PC-9 (cell line): ENCODE measurements at regions of chr15 and their contacts with region 1.

Region 1: DNA sequence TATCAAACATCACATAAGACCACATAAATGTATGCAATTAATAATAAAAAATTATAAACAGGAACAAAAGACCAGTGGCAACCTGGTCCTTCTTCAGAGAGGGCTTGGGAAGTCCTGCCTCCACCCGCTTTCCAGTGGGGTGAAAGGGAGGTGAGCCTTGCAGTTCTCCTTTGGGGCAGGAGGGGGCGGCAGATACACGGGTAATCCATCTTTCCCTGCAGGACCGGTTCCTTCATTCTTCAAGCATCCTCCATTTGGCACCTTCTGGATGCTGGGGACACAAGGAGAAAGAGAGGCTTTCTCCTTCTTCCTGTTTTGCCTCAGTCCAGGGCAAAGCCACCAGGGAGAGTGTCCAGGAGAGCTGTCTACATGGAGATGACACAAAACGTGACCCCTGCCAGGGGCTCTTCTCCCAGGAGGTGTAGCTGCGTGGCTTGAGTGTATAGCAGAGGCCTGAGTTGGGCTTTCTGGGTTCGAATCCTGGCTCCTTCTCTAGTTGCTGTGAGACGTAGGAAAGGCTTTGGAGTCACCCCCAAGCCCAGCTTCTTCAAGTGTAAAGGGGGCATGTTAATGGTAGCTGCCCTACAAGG is 23.2 kb downstream of the RPLP1 start:
- DNase-seq: peak; percentile 67 to 82
- H3K4me3 ChIP-seq: no peak overlapping the region
- H3K27ac ChIP-seq: no peak overlapping the region
- H3K4me1 ChIP-seq: peaks cover 4% of the 10 kb centered on the region; the same call in 1 of the 2 replicates
- H3K27me3 ChIP-seq: no peaks in the 10 kb centered on the region
- CTCF ChIP-seq: peak; percentile 87

Region 2: GRCh38 chr15:69225355-69226025 is 250.4 kb before region 1 on chr15:
- CTCF ChIA-PET with region 1: no interaction called
- POLR2A ChIA-PET with region 1: no interaction called
- intact Hi-C with region 1: no loop called
- DNase-seq: peak in 1 of 2 experiments; percentile 35
- H3K4me3 ChIP-seq: no peak overlapping the region
- H3K27ac ChIP-seq: no peak overlapping the region
- H3K4me1 ChIP-seq: peaks cover 16% of the 10 kb centered on the region
- H3K27me3 ChIP-seq: no peaks in the 10 kb centered on the region
- CTCF ChIP-seq: peak; percentile 49; the same call in 1 of the 2 replicates

Region 3: DNA sequence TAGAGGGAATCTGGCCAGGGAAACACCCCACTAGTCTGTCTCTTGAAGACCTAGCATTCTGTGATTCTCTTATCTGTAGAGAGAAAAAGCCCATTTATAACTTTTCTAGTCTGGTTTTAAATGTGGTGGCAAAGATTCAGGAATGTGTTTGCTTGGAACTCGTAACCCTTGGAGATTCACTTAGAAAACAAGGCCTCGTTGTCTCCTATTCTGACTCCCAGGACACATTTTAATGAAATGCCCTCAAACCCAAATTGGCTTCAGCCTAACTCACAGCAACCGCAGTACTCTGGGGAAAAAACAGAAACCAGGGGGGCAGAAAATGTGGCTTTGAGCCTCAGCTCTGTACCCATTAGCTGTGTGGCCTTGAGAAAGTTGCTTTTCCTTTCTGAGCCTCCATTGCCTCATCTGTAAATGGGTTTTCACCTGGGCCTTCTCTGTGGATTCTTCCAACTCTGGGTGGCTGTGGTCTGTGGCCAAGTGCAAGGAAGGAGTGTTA is 13.3 kb after region 1 on chr15:
- CTCF ChIA-PET with region 1: no interaction called
- POLR2A ChIA-PET with region 1: no interaction called
- intact Hi-C with region 1: no loop called
- DNase-seq: no peak
- H3K4me3 ChIP-seq: no peak overlapping the region
- H3K27ac ChIP-seq: no peak overlapping the region
- H3K4me1 ChIP-seq: peaks cover 10% of the 10 kb centered on the region
- H3K27me3 ChIP-seq: no peaks in the 10 kb centered on the region
- CTCF ChIP-seq: no peak

Region 4: DNA sequence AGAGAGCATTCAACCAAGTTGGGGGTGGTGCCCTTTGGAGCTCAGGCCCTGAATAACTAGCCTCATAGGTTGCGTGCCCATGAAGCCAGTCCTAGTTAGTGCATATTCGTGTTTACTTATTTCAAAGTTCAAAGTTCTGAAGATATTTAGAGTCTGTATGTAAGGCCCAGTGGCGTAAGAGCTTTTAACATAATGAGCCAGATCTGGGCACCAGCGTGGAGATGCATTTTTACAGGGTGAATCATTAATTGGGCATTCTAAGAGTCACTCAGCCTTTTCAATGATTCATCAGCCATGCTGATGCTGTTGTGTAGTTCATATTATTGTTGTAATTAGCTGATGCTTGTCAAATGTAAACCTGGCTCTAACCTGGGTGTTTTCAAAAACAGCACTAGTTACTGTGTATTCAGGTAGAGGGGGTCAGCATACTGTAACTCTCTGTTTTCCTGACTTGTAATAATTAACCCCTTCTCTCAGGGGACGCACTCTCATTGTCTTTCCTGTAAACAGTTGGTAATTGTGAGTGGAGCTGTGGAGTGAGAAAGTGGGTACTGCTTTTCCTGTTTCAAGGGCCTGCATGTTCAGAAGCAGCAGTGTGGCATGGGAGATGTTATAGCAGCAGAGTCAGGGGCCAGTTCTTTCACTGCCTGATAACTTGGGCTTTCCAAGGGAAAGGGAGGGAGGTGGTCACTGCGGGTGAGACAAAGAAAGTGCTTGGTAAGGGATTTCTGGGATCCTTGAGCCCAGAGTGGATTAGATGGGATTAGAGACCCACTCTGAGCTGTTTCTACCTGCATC is 81.7 kb after region 1 on chr15:
- CTCF ChIA-PET with region 1: interaction called, 20 read pairs
- POLR2A ChIA-PET with region 1: interaction called, 10 read pairs
- intact Hi-C with region 1: loop called (anchors 5 kb)
- DNase-seq: peak; percentile 67 to 95
- H3K4me3 ChIP-seq: no peak overlapping the region
- H3K27ac ChIP-seq: peak overlapping the region; percentile 63
- H3K4me1 ChIP-seq: peaks cover 54% of the 10 kb centered on the region
- H3K27me3 ChIP-seq: no peaks in the 10 kb centered on the region
- CTCF ChIP-seq: no peak

Region 5: GRCh38 chr15:69593981-69594966 is 118.4 kb after region 1 on chr15:
- CTCF ChIA-PET with region 1: no interaction called
- POLR2A ChIA-PET with region 1: no interaction called
- intact Hi-C with region 1: loop called (anchors 2 kb)
- DNase-seq: peak; percentile 83 to 98
- H3K4me3 ChIP-seq: peak overlapping the region; percentile 5; the same call in 1 of the 2 replicates
- H3K27ac ChIP-seq: peak overlapping the region; percentile 85
- H3K4me1 ChIP-seq: peaks cover 49% of the 10 kb centered on the region
- H3K27me3 ChIP-seq: peaks cover 27% of the 10 kb centered on the region
- CTCF ChIP-seq: no peak

Region 6: DNA sequence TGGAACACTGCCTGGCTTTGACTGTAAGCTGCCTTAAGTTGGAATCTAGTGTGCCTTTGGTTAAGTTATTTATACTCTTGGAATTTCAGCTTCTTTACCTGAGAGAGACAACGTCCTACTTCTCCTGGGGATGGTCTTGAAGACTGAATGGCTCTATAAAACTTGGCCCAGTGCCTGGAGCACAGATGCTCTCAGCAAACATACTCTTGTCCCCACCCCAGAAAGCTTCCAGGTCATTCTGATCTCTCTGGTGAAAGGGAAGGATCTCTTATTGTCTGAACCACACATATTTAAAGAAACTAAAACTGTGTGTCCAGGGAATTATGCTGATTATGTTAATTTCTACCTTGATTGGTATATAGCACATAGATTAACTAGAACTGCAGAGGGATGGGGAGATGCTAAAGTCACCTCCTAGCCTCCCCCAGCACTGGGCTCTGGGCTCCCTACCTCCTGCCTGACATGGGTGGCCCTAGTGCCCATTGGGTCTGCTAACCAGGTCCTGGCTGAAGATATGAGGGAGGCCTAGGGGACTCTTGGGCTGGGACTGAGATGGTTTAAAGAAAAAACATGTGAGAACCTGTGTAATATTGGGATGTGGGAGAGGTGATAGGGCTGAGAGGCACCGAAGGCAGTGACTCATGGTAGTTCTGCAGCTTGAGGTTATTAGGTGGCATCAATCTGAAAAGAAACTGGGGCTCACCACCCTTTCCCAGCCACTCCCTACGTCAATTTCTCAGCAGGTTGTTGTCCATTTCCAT is 147.7 kb after region 1 on chr15:
- CTCF ChIA-PET with region 1: no interaction called
- POLR2A ChIA-PET with region 1: no interaction called
- intact Hi-C with region 1: no loop called
- DNase-seq: no peak
- H3K4me3 ChIP-seq: no peak overlapping the region
- H3K27ac ChIP-seq: peak overlapping the region; percentile 9; the same call in 1 of the 2 replicates
- H3K4me1 ChIP-seq: peaks cover 11% of the 10 kb centered on the region
- H3K27me3 ChIP-seq: no peaks in the 10 kb centered on the region
- CTCF ChIP-seq: no peak

Region 7: GRCh38 chr15:69997697-69998273 is 521.9 kb after region 1 on chr15:
- CTCF ChIA-PET with region 1: no interaction called
- POLR2A ChIA-PET with region 1: no interaction called
- intact Hi-C with region 1: loop called (anchors 1 kb)
- DNase-seq: peak; percentile 91 to 94
- H3K4me3 ChIP-seq: no peak overlapping the region
- H3K27ac ChIP-seq: no peak overlapping the region
- H3K4me1 ChIP-seq: peaks cover 19% of the 10 kb centered on the region
- H3K27me3 ChIP-seq: no peaks in the 10 kb centered on the region
- CTCF ChIP-seq: no peak

Region 8: GRCh38 chr15:70584838-70585706 is 1109.2 kb after region 1 on chr15:
- CTCF ChIA-PET with region 1: no interaction called
- POLR2A ChIA-PET with region 1: no interaction called
- intact Hi-C with region 1: loop called (anchors 5 kb)
- DNase-seq: peak; percentile 71 to 86
- H3K4me3 ChIP-seq: peak overlapping the region; percentile 46; the same call in 1 of the 2 replicates
- H3K27ac ChIP-seq: peak overlapping the region; percentile 81
- H3K4me1 ChIP-seq: peaks cover 18% of the 10 kb centered on the region
- H3K27me3 ChIP-seq: no peaks in the 10 kb centered on the region
- CTCF ChIP-seq: peak; percentile 74